MCF 10A (cell line): ENCODE measurements at regions of chr12 and their contacts with region 1.

Region 1: GRCh38 chr12:17928708-17929366 is 161.2 kb downstream of the RERGL start:
- DNase-seq: peak; percentile 60
- H3K4me3 Mint-ChIP-seq: no peak overlapping the region
- H3K27ac Mint-ChIP-seq: no peak overlapping the region
- H3K4me1 Mint-ChIP-seq: peaks cover 7% of the 10 kb centered on the region
- H3K27me3 Mint-ChIP-seq: peaks cover 15% of the 10 kb centered on the region
- CTCF ChIP-seq: peak; percentile 55

Region 2: GRCh38 chr12:17588968-17589367 is 339.9 kb before region 1 on chr12:
- CTCF ChIA-PET with region 1: no interaction called
- POLR2A ChIA-PET with region 1: no interaction called
- intact Hi-C with region 1: loop called (anchors 5 kb)
- DNase-seq: peak; percentile 47
- H3K4me3 Mint-ChIP-seq: no peak overlapping the region
- H3K27ac Mint-ChIP-seq: no peak overlapping the region
- H3K4me1 Mint-ChIP-seq: no peaks in the 10 kb centered on the region
- H3K27me3 Mint-ChIP-seq: peaks cover 24% of the 10 kb centered on the region
- CTCF ChIP-seq: peak; percentile 62

Region 3: GRCh38 chr12:17875230-17875629 is 53.6 kb before region 1 on chr12:
- CTCF ChIA-PET with region 1: interaction called, 3 read pairs
- POLR2A ChIA-PET with region 1: no interaction called
- intact Hi-C with region 1: loop called (anchors 2 kb)
- DNase-seq: peak; percentile 27
- H3K4me3 Mint-ChIP-seq: no peak overlapping the region
- H3K27ac Mint-ChIP-seq: no peak overlapping the region
- H3K4me1 Mint-ChIP-seq: no peaks in the 10 kb centered on the region
- H3K27me3 Mint-ChIP-seq: peaks cover 55% of the 10 kb centered on the region
- CTCF ChIP-seq: peak; percentile 15